Adrenal gland (tissue), 19 donors: ENCODE measurements at regions of chr12 and their contacts with region 1.

Region 1: DNA sequence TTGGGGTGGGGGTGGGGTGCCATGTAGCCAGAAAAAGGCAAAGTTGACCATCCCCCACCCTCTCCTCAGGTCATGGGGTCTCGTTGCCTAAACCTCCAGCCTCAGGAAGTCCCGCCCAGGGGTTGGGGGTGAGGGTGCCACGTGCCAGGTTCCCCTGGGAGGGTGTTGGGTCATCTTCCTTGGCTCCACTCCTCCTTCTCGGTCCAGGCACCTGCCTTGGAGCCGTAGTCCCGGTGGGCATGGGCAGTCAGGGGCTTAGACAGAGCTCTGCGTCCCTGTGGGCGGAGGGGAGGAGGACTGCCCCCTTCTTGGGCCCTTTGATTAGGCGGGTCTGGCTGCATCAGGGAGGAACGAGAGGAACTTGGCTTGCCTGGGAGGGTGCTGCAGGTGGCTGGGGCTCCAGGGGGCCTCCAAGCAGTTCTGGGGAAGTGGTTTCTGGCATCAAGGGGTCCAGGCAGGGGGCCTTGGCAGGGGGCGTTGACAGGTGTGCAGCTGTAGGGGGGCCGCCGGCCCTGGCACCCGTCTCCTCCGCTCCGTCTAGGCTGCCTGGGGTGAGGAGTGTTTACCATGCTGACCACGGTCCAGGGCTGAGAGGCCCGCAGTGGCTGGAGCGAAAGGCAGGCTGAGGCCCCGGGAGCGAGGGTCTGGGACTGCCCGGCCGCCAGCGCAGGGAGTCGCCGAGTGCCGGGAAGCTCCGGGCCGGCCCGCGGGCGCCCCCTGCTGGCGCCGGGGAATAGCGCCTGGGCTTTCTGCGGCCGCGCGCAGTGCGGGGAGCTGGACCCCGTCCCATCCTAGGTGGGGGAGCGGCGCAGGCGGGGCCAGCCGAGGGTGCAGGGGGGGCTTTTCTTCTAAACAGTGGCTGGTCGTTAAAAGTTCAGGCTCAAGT is 7.9 kb downstream of the SETD1B start:
- DNase-seq: peak; percentile 71 to 84 (median 79)
- H3K4me3 ChIP-seq: peak overlapping the region in 3 of 4 donors; percentile 7 to 49 (median 32)
- H3K27ac ChIP-seq: peak overlapping the region; percentile 43 to 85 (median 75)
- H3K4me1 ChIP-seq: peaks cover 25 to 43% of the 10 kb centered on the region in 2 donors
- H3K27me3 ChIP-seq: no peaks in the 10 kb centered on the region
- CTCF ChIP-seq: peak; percentile 75 to 100 (median 92)
- POLR2A ChIP-seq: no peak

Region 2: DNA sequence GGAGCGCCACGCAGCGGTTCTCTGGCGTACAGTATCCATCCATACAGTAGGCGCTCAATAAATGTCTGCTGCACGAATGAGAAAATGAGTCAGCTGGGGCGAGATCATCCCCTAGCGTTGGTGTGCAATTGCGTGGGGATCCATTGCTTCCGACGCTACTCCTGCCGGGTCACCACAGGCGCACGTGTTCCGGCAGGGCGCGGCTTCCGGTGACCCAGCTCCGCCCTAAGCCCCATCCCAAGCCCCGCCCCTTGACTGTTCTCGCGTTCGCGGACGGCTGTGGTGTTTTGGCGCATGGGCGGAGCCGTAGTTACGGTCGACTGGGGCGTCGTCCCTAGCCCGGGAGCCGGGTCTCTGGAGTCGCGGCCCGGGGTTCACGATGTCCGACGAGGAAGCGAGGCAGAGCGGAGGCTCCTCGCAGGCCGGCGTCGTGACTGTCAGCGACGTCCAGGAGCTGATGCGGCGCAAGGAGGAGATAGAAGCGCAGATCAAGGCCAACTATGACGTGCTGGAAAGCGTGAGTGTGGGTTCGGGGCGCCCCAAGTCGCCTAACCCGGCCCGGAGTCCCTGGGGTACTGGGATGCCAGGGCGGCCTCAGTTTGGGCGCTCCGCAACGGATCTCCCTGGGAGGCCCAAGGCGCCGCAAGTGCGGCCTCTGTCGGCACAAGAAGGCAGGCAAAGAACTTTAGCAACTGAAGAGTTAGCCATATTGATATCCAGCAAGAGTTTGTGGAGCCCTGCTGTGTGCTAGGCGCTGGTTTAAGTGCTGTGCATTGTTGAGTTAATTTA is 77.0 kb after region 1 on chr12 and contains the start of gene PSMD9:
- intact Hi-C with region 1: loop called (anchors 5 to 10 kb)
- DNase-seq: peak; percentile 98
- H3K4me3 ChIP-seq: peak within 1 kb of the TSS; percentile 31 to 64 (median 50)
- H3K27ac ChIP-seq: peak within 1 kb of the TSS; percentile 77 to 99 (median 92)
- H3K4me1 ChIP-seq: peaks cover 19 to 38% of the 10 kb centered on the region in 2 donors
- H3K27me3 ChIP-seq: no peaks in the 10 kb centered on the region
- CTCF ChIP-seq: peak; percentile 46 to 72 (median 60)
- POLR2A ChIP-seq: peak; percentile 77 to 89
- total RNA-seq, gene PSMD9: 45.3 to 145 (median 58.4) TPM

Region 3: GRCh38 chr12:121992059-121992879 is 180.6 kb after region 1 on chr12:
- intact Hi-C with region 1: no loop called
- DNase-seq: peak in 5 of 7 donors; percentile 13 to 55 (median 30)
- H3K4me3 ChIP-seq: no peak overlapping the region
- H3K27ac ChIP-seq: no peak overlapping the region
- H3K4me1 ChIP-seq: no peaks in the 10 kb centered on the region
- H3K27me3 ChIP-seq: no peaks in the 10 kb centered on the region
- CTCF ChIP-seq: no peak
- POLR2A ChIP-seq: no peak